ENCODE measurements at regions of chr11 and their contacts with region 1.

Region 1: DNA sequence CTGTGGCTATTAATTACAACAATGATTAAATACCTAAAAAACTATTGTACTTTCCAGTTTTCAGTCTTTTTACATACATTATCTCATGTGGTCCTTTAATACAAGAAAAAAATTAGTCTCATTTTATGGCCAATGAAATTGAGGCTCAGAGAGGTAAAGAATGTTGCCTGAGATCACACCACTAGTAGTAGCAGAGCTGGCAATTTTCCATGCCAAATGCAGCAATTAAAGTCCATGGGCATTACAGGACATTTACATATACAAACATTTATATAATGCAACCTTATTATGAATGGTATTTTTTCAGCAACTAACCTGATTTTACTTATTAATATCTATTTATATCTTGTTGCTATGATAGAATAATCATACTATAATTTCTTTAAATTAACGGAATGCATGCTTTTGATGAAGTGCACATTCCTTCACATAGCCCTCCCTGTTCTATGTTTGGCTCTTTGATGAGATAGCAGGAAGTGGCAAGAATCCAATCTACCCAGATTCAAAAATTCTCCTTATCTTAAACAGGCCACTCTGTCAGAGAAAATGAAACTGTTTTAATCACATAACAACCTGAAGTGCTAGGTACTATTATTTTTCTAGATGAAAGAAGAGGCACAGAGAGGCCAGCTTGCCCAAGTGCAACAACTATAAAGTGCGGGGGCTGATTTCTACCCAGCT is 120.9 kb upstream of the LDLRAD3 start:
- DNase-seq: no peak
- ATAC-seq: no peak
- H3K4me3 ChIP-seq: no peak overlapping the region
- H3K27ac ChIP-seq: no peak overlapping the region
- H3K4me1 ChIP-seq: peaks cover 0 to 30% (median 0%) of the 10 kb centered on the region in 4 donors
- H3K27me3 ChIP-seq: no peaks in the 10 kb centered on the region
- CTCF ChIP-seq: no peak
- POLR2A ChIP-seq: no peak

Region 2: GRCh38 chr11:35419184-35419829 is 403.6 kb before region 1 on chr11 and contains the start of gene SLC1A2:
- intact Hi-C with region 1: no loop called
- DNase-seq: no peak
- ATAC-seq: peak in 2 of 4 donors; percentile 15 to 25
- H3K4me3 ChIP-seq: peak within 1 kb of the TSS in 1 of 3 donors; percentile 29
- H3K27ac ChIP-seq: no peak within 1 kb of the TSS
- H3K4me1 ChIP-seq: peaks cover 0 to 14% (median 0%) of the 10 kb centered on the region in 4 donors
- H3K27me3 ChIP-seq: no peaks in the 10 kb centered on the region
- CTCF ChIP-seq: no peak
- POLR2A ChIP-seq: no peak
- total RNA-seq, gene SLC1A2: 7.6 to 87.4 (median 13.3) TPM

Region 3: DNA sequence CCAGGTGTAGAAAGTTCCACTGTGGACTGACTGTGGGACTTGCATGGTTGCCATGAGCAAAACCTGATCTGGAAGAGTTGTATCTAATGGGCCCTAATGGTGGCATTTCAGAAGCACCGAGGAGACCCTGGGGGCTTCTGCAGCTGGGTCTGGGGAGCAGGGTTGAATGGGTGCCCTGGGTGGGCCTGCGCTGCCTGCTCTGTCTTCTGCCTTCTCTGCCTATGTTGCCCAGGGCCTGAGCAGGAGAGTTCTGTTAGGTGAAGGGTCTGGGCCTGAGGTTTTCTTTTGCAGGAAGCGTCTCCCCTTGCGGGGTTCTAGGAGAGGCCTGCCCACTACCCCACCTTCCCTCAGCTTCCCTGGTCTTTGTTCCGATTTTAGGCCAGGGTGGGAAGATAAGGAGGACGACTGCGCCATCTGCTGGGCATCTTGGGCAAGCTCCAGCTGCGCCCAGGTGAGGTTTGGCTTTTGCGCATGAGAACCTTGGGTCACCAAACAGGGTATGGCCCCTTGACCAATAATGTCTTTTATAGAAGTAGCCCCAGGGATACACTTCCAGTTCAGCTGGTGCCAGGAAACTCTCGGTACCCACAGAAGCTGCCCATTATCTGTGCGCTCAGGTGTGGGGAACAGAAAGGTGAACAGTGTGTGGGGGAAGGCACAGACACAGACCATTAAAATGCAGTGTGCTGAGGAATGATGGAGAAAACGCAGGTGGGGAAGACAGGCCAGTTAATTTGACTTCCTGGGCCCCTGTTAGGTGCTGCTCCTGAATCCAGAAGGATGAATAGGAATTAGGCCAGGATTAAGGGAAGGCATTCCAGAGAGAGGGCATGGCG is 443.1 kb after region 1 on chr11:
- intact Hi-C with region 1: loop called in 1 of 2 experiments (anchors 10 kb)
- DNase-seq: peak; percentile 58 to 65 (median 63)
- ATAC-seq: peak; percentile 66 to 73 (median 72)
- H3K4me3 ChIP-seq: no peak overlapping the region
- H3K27ac ChIP-seq: no peak overlapping the region
- H3K4me1 ChIP-seq: peaks cover 0 to 30% (median 9%) of the 10 kb centered on the region in 4 donors
- H3K27me3 ChIP-seq: no peaks in the 10 kb centered on the region
- CTCF ChIP-seq: peak; percentile 70 to 88 (median 74)
- POLR2A ChIP-seq: no peak